OCI-LY7 (cell line): ENCODE measurements at regions of chr1 and their contacts with region 1.

Region 1: GRCh38 chr1:70354332-70355110 is at the start of gene ANKRD13C:
- DNase-seq: peak; percentile 96
- H3K4me3 ChIP-seq: peak within 1 kb of the TSS; percentile 74
- H3K27ac ChIP-seq: peak within 1 kb of the TSS; percentile 76
- H3K4me1 ChIP-seq: peaks cover 16% of the 10 kb centered on the region
- CTCF ChIP-seq: no peak
- total RNA-seq, gene ANKRD13C: 22.1 and 25.0 TPM in 2 replicates

Region 2: GRCh38 chr1:70221241-70222121 is 133.0 kb before region 1 on chr1 and contains the start of gene SRSF11:
- CTCF ChIA-PET with region 1: no interaction called
- POLR2A ChIA-PET with region 1: interaction called, 7 read pairs
- intact Hi-C with region 1: loop called (anchors 1 kb)
- DNase-seq: peak; percentile 95
- H3K4me3 ChIP-seq: peak within 1 kb of the TSS; percentile 90
- H3K27ac ChIP-seq: peak within 1 kb of the TSS; percentile 92
- H3K4me1 ChIP-seq: peaks cover 53% of the 10 kb centered on the region
- CTCF ChIP-seq: peak; percentile 33; the same call in 1 of the 2 replicates
- total RNA-seq, gene SRSF11: 165 and 198 TPM in 2 replicates

Region 3: DNA sequence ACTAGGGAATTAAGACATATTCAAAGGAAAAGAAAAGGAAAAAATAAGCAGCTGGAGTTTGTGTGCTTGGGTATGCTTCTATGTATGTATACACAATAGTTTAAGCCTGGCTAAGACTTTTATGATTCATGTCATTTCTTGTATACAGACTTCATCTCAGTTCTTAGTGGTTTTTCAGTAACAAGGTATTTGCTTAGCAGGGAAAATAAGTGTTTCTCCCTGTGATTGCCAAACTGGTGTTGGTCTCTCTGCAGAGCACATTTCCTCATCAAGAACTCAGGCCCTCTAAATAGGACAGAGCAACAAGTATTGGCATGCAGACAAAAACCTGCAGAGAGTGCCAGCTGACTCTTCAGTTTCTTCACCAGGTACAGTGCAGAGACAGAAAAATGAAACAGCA is 1210.7 kb after region 1 on chr1:
- CTCF ChIA-PET with region 1: no interaction called
- POLR2A ChIA-PET with region 1: no interaction called
- intact Hi-C with region 1: no loop called
- DNase-seq: no peak
- H3K4me3 ChIP-seq: no peak overlapping the region
- H3K27ac ChIP-seq: no peak overlapping the region
- H3K4me1 ChIP-seq: no peaks in the 10 kb centered on the region
- CTCF ChIP-seq: no peak